ENCODE measurements at regions of chr1 and their contacts with region 1.

Region 1: GRCh38 chr1:59971464-59971911 is 44.9 kb upstream of the CYP2J2 start:
- DNase-seq: peak; percentile 71
- ATAC-seq: peak; percentile 84 to 89

Region 2: GRCh38 chr1:60126723-60127122 is 155.2 kb after region 1 on chr1:
- intact Hi-C with region 1: loop called (anchors 10 kb)
- DNase-seq: no peak
- ATAC-seq: no peak

Region 3: GRCh38 chr1:60857851-60858250 is 886.4 kb after region 1 on chr1:
- intact Hi-C with region 1: loop called in 1 of 2 experiments (anchors 10 kb)
- DNase-seq: no peak
- ATAC-seq: no peak

Region 4: DNA sequence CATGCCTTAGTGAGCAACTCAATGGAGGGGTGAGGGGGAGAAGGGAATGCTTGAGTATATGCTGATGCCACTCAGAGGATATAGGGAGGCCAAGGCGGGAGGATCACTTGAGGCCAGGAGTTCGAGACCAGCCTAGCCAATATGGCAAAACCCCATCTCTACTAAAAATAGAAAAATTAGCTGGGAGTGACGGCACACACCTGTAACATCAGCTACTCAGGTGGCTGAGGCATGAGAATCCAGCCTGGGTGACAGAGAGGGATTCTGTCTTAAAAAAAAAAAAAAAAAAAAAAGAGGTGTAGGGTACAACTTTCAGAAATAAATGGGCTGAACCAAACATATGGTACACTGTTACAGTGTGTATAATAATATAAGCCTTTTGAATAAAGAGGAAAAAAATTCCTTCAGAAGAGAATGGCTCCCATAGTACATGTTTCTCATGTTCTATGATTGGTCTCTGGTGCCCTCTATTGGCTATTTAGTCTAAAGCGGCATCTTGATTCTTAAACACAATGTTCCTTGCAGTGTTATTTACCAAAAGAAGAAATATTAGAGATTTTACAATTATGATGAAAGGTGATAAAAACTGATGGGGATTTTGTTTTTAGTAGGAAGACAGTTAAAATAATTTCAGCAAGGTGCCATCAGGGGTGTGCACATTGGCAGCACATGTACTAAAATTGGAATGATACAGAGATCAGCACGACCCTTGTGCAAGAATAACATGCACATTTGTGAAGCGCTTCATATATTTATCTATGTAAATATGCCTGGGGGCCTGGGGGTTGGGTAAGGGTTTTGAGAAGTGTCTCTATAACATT is 1880.6 kb after region 1 on chr1:
- intact Hi-C with region 1: loop called in 1 of 2 experiments (anchors 10 kb)
- DNase-seq: no peak
- ATAC-seq: peak; percentile 72 to 78

Measured in left cardiac atrium (tissue), 4 donors.